A549 (cell line): ENCODE measurements at regions of chr19 and their contacts with region 1.

Region 1: DNA sequence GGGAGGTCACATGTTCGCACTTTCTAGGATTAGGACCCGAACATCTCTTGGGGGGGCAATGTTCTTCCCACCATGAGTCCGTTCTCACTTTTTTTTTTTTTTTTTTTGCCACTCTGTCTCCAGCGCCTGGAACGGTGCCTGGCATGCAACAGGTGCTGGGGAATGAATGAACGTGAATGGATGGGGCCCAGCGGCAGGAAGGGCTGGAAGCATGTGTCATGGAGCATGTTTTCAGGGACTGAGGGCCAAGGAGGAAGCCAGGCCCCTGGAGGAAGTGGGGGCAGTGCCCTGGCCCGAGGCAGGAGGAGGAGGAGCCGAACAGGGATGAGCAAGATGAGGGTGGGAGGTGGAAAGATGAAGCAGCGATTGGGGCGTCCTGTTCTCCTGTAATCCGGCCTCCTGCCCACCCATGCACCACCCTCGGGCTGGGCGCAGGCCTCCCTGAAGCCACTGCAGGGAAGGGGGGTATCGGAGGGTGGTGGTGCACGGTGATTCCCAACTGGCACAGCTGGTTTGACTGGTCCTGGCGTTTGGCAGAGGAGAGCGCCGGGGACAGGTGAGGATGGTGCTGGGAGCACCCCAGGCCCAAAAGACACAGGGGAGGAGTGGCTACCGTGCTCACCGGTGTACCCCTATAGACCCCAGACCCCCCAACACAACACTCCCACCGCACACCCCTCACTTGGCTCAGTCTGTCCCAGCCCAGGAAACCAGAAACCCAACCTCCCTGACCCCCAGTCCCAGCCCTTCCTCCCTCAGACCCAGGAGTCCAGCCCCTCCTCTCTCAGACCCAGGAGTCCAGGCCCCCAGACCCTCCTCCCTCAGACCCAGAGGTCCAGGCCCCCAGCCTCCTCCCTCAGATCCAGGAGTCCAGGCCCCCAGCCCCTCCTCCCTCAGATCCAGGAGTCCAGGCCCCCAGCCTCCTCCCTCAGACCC is 8.6 kb upstream of the SULT2B1 start:
- DNase-seq: peak; percentile 69 to 78
- ATAC-seq: peak; percentile 72 to 79
- H3K4me3 ChIP-seq: no peak overlapping the region
- H3K27ac ChIP-seq: peak overlapping the region; percentile 62 to 85
- H3K4me1 ChIP-seq: peaks cover 41% of the 10 kb centered on the region
- CTCF ChIP-seq: no peak
- EP300 ChIP-seq: no peak
- POLR2A ChIP-seq: no peak
- RAD21 ChIP-seq: no peak

Region 2: GRCh38 chr19:48290771-48291488 is 252.5 kb before region 1 on chr19:
- CTCF ChIA-PET with region 1: no interaction called
- POLR2A ChIA-PET with region 1: no interaction called
- DNase-seq: peak; percentile 87 to 91
- ATAC-seq: peak; percentile 86 to 91
- H3K4me3 ChIP-seq: peak overlapping the region; percentile 49
- H3K27ac ChIP-seq: peak overlapping the region; percentile 34 to 81; a peak in 5 of 6 replicates
- H3K4me1 ChIP-seq: peaks cover 8% of the 10 kb centered on the region
- CTCF ChIP-seq: peak; percentile 99
- EP300 ChIP-seq: no peak
- POLR2A ChIP-seq: no peak
- RAD21 ChIP-seq: peak; percentile 92 to 93

Region 3: GRCh38 chr19:48524728-48525127 is 18.7 kb before region 1 on chr19:
- CTCF ChIA-PET with region 1: interaction called, 11 read pairs
- POLR2A ChIA-PET with region 1: no interaction called
- DNase-seq: no peak
- ATAC-seq: no peak
- H3K4me3 ChIP-seq: no peak overlapping the region
- H3K27ac ChIP-seq: no peak overlapping the region
- H3K4me1 ChIP-seq: peaks cover 1% of the 10 kb centered on the region
- CTCF ChIP-seq: no peak
- EP300 ChIP-seq: no peak
- POLR2A ChIP-seq: no peak
- RAD21 ChIP-seq: no peak

Region 4: DNA sequence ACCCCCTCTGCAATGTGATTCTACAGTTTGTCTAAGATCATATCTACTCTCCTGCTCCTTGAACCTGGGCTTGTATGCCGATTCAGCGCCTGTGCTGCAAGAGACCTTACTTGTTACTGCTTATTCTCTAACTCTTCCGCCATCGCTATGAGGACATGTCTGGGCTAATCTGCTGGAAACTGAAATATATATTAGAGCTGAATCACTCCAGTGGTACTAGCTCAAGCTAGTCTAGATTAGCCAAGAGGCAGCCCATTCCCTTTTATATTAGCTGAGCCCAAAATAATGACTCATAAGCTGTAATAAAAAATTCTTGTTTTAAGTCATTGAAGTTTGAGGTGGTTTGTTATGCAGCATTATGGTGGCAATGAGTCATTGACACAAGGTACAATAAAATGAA is 728.8 kb after region 1 on chr19:
- CTCF ChIA-PET with region 1: no interaction called
- POLR2A ChIA-PET with region 1: no interaction called
- DNase-seq: peak in 1 of 2 experiments; percentile 44
- ATAC-seq: peak in 1 of 2 experiments; percentile 34; a peak in 1 of 6 replicates
- H3K4me3 ChIP-seq: no peak overlapping the region
- H3K27ac ChIP-seq: peak overlapping the region in 1 of 2 experiments; percentile 45; a peak in 1 of 6 replicates
- H3K4me1 ChIP-seq: peaks cover 4% of the 10 kb centered on the region; the same call in 2 of the 3 replicates
- CTCF ChIP-seq: no peak
- EP300 ChIP-seq: no peak
- POLR2A ChIP-seq: no peak
- RAD21 ChIP-seq: no peak